Adrenal gland (tissue), 19 donors: ENCODE measurements at regions of chr15 and their contacts with region 1.

Region 1: DNA sequence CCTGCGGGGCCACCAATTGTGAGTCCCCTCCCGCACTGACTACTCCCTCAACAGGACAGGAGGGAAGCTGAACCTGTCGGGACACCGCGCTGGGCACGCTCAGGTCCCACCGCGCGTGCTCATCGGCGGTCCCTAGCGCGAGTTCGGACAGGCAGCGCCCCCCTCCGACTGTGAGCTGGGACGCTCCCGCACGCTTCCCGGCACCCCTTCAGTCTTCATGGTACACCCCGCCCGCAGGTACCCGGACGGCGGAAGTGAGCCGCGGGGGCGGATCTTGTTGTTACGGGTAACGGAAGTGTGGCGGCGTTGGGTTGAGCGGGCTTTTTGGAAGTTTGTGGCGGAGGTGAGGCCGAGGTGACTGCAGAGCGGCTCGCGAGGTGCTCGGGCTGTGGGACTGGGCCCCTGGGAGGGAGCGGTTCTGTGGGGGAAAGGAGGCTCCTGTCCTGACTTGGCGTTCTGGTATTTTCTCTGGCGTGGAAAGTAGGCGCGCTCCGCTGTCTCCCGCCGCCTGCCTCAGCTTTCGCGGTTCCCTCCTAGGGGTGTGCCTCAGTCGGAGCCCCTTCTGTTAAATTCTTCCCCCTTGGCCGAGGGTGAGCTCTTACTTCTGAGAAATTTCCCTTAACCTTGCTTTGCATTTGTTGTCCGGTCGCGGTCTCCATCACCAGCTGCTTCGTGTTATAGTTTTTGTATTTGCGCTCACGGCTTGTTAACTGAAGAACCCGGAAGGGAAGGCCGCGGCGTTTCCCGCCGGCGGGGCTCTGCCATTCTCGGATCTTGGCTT is at the start of gene FANCI:
- DNase-seq: peak; percentile 94 to 98 (median 97)
- H3K4me3 ChIP-seq: peak within 1 kb of the TSS; percentile 18 to 80 (median 60)
- H3K27ac ChIP-seq: peak within 1 kb of the TSS in 1 of 5 donors; percentile 28
- H3K4me1 ChIP-seq: peaks cover 5 to 17% of the 10 kb centered on the region in 2 donors
- H3K27me3 ChIP-seq: no peaks in the 10 kb centered on the region
- CTCF ChIP-seq: peak in 5 of 6 experiments; percentile 10 to 48 (median 38)
- POLR2A ChIP-seq: peak in 1 of 2 donors; percentile 43
- total RNA-seq, gene FANCI: 1.5 to 23.5 (median 7.0) TPM

Region 2: DNA sequence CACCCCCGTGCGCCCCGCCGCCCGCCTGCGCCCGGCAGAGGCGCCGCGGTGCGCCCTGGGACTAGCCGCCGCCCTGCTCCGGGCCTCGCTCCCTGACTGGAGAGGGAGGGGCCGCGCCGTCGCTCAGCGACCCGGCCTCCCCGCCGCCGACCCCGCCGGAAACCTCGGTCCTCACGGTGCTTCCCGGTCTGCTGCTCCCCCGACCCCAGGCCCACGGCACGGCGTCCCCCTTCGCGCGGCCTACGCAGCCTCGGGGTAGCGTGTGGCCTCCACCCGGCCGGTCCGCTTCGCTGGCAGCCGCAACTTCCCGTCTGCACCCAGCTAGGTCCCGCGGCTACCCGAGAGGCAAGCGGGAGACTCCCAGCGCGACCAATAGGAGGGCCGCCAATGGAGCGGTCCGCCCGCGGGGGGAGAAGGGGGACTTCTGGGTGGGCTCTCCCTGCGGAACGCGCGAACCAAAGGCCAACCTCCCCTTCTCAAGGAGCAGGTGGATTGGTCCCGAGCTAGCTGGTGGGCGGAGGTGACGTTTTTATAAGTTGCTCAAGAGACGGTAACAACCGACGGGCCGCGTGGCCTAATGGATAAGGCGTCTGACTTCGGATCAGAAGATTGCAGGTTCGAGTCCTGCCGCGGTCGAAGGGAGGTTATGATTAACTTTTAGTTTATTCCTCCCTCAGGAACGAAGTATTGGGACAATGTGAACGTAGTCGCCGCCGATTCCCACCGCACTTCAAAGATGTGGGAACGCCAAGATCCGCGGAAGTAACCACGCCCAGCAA is 90.8 kb after region 1 on chr15 and contains the start of gene POLG:
- intact Hi-C with region 1: loop called in 1 of 2 experiments (anchors 10 kb)
- DNase-seq: peak; percentile 99 to 100 (median 99)
- H3K4me3 ChIP-seq: peak within 1 kb of the TSS; percentile 37 to 93 (median 69)
- H3K27ac ChIP-seq: peak within 1 kb of the TSS in 4 of 5 donors; percentile 86 to 97 (median 90)
- H3K4me1 ChIP-seq: peaks cover 9 to 47% of the 10 kb centered on the region in 2 donors
- H3K27me3 ChIP-seq: no peaks in the 10 kb centered on the region
- CTCF ChIP-seq: peak in 1 of 6 experiments; percentile 5
- POLR2A ChIP-seq: peak; percentile 93 to 95
- total RNA-seq, gene POLG: 31.6 to 127 (median 48.4) TPM